WTC11 (cell line): ENCODE measurements at regions of chr12 and their contacts with region 1.

Region 1: GRCh38 chr12:109597795-109598427 is 24.3 kb downstream of the MVK start:
- DNase-seq: peak; percentile 96
- ATAC-seq: peak; percentile 93
- H3K4me3 Mint-ChIP-seq: no peak overlapping the region
- H3K27ac Mint-ChIP-seq: peak overlapping the region; percentile 32; the same call in 1 of the 2 replicates
- H3K4me1 Mint-ChIP-seq: peaks cover 15% of the 10 kb centered on the region
- H3K27me3 Mint-ChIP-seq: no peaks in the 10 kb centered on the region
- CTCF ChIP-seq: peak; percentile 92

Region 2: GRCh38 chr12:109573029-109573913 is 24.6 kb before region 1 on chr12 and contains the starts of genes MMAB and MVK:
- CTCF ChIA-PET with region 1: interaction called, 13 read pairs
- POLR2A ChIA-PET with region 1: no interaction called
- DNase-seq: peak; percentile 99
- ATAC-seq: peak; percentile 98
- H3K4me3 Mint-ChIP-seq: peak within 1 kb of the TSS; percentile 81
- H3K27ac Mint-ChIP-seq: peak within 1 kb of the TSS; percentile 97
- H3K4me1 Mint-ChIP-seq: peaks cover 17% of the 10 kb centered on the region
- H3K27me3 Mint-ChIP-seq: no peaks in the 10 kb centered on the region
- CTCF ChIP-seq: no peak
- total RNA-seq, gene MMAB: 22.0 to 28.7 TPM (median 27.4 TPM) in 3 replicates
- total RNA-seq, gene MVK: 13.2 to 15.3 TPM (median 13.9 TPM) in 3 replicates

Region 3: DNA sequence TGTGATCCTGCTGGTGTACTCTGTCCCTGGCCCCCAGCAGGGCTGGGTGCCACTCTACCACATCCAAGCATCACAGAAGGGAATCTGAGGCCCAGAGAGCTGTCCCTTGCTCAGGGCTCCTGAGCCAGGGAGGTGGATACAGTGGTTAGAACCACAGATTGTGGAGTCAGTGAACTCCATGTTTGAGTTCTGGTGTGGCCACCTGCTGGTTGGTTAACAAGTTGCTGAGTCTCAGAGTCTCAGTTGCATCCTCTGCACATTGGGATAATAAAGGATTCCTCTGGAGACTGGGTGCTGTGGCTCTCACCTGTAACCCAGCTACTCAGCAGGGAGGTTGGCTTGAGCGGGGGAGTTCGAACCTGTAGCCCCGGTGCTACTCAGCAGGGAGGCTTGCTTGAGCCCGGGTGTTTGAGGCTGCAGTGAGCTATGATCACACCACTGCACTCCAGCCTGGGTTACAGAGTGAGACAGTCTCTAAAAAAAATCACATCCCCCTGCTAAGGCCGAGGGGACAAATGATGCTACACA is 15.1 kb after region 1 on chr12:
- CTCF ChIA-PET with region 1: interaction called, 34 read pairs
- POLR2A ChIA-PET with region 1: no interaction called
- DNase-seq: peak; percentile 25
- ATAC-seq: peak; percentile 74
- H3K4me3 Mint-ChIP-seq: no peak overlapping the region
- H3K27ac Mint-ChIP-seq: no peak overlapping the region
- H3K4me1 Mint-ChIP-seq: peaks cover 4% of the 10 kb centered on the region
- H3K27me3 Mint-ChIP-seq: no peaks in the 10 kb centered on the region; the same call in 1 of the 2 replicates
- CTCF ChIP-seq: no peak

Region 4: GRCh38 chr12:109697877-109698468 is 100.1 kb after region 1 on chr12:
- CTCF ChIA-PET with region 1: interaction called, 21 read pairs
- POLR2A ChIA-PET with region 1: no interaction called
- DNase-seq: no peak
- ATAC-seq: no peak
- H3K4me3 Mint-ChIP-seq: no peak overlapping the region
- H3K27ac Mint-ChIP-seq: no peak overlapping the region
- H3K4me1 Mint-ChIP-seq: peaks cover 4% of the 10 kb centered on the region; the same call in 1 of the 2 replicates
- H3K27me3 Mint-ChIP-seq: peaks cover 3% of the 10 kb centered on the region; the same call in 1 of the 2 replicates
- CTCF ChIP-seq: no peak

Region 5: DNA sequence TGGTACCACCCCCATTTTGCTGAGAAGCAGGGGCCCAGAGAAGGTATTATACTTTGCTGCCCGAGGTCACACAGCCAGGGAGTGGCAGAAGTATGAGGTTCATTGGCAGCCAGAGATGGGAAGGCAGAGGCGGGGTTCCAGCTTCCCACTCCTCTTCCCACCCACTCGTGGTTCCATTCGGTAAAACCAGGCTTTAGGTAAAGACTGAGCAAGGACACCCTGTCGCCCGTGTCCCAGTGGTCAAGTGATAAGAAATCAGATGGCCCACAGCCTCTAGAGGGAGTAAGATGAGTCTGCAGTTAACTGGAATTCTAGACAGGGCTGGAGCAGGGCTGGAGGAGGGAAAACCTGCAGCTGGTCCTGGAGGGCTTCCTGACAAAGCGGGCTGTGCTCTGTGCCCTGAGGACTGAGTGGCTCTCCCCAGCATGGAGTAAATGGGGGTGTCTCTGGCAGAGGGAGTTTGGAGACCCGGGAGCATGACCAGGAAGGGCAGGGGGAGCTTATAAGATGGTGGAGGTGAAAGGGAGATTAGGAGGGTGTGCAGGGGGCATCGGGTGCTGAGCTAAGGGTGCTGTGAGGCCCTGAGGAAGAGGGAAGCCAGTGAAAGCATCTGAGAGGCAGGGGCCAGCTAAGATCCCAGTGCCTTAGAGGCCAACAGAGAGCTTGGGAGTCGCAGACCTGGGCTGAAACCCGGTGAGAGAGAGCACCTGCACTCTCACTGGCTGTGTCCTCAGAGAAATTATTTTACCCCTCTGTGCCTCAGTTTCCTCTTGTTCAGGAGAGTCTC is 121.5 kb after region 1 on chr12:
- CTCF ChIA-PET with region 1: interaction called, 45 read pairs
- POLR2A ChIA-PET with region 1: interaction called, 3 read pairs
- DNase-seq: peak; percentile 45
- ATAC-seq: peak; percentile 57
- H3K4me3 Mint-ChIP-seq: peak overlapping the region; percentile 50
- H3K27ac Mint-ChIP-seq: peak overlapping the region; percentile 77; the same call in 1 of the 2 replicates
- H3K4me1 Mint-ChIP-seq: peaks cover 25% of the 10 kb centered on the region
- H3K27me3 Mint-ChIP-seq: peaks cover 41% of the 10 kb centered on the region
- CTCF ChIP-seq: no peak

Region 6: GRCh38 chr12:109763201-109763841 is 165.4 kb after region 1 on chr12:
- CTCF ChIA-PET with region 1: interaction called, 15 read pairs
- POLR2A ChIA-PET with region 1: no interaction called
- DNase-seq: no peak
- ATAC-seq: no peak
- H3K4me3 Mint-ChIP-seq: no peak overlapping the region
- H3K27ac Mint-ChIP-seq: no peak overlapping the region
- H3K4me1 Mint-ChIP-seq: peaks cover 10% of the 10 kb centered on the region
- H3K27me3 Mint-ChIP-seq: no peaks in the 10 kb centered on the region
- CTCF ChIP-seq: no peak

Region 7: GRCh38 chr12:109822951-109823411 is 225.1 kb after region 1 on chr12:
- CTCF ChIA-PET with region 1: no interaction called
- POLR2A ChIA-PET with region 1: no interaction called
- DNase-seq: no peak
- ATAC-seq: no peak
- H3K4me3 Mint-ChIP-seq: no peak overlapping the region
- H3K27ac Mint-ChIP-seq: 0 out of 2 replicates have a peak overlapping the region, but pooled peaks have one; percentile 53
- H3K4me1 Mint-ChIP-seq: peaks cover 11% of the 10 kb centered on the region
- H3K27me3 Mint-ChIP-seq: no peaks in the 10 kb centered on the region; the same call in 1 of the 2 replicates
- CTCF ChIP-seq: no peak